ENCODE measurements at regions of chrX and their contacts with region 1.

Region 1: GRCh38 chrX:14528629-14529289 is 577 bp upstream of the GLRA2 start:
- DNase-seq: peak; percentile 43 to 93 (median 70)

Region 2: GRCh38 chrX:14095702-14096101 is 433.1 kb before region 1 on chrX:
- intact Hi-C with region 1: loop called (anchors 2 kb)
- DNase-seq: peak in 7 of 10 donors; percentile 9 to 73 (median 32)

Region 3: DNA sequence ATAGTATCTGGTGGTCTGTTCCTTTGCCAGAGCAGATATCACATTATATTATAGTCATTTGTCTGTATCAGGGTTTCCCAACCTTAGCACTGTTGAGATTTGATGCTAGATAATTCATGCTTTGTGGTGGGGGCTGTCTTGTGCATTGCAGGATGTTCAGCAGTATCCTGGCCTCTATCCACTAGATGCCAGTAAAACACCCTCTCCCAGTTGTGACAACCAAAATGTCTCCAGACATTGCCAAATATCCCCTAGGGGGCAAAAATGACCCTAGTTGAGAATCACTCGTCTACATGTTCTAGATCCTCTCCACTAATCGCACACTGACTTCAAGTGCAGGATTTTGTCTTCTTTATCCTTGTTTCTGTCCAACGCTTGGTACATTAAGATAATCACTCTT is 183.3 kb after region 1 on chrX:
- intact Hi-C with region 1: no loop called
- DNase-seq: no peak